Activated CD4-positive, alpha-beta memory T cell treated with anti-CD3 and anti-CD28 coated beads for 36 hours (primary cell): ENCODE measurements at regions of chr1 and their contacts with region 1.

Region 1: DNA sequence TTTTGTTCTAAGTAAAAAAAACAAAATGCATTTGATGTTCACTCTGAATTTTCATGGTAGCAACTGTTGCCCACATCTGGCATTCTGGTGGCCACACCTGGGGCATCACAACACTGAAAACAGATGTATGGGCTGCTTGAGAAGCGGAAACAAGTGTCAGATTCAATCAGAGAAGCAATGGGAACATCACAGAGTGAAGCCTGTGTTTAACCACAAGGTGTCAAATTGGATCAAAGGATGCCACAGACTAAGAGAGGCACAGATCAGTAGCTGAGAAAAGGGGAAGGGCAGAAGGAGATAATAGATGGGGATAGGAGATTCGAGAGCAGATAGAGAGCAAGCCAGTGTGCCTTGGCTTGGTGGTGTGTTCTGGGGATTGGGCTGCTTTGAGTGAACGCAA is 49.8 kb upstream of the MTF2 start:
- DNase-seq: peak; percentile 29
- H3K4me3 Mint-ChIP-seq: no peak overlapping the region
- H3K27ac Mint-ChIP-seq: no peak overlapping the region
- H3K4me1 Mint-ChIP-seq: peaks cover 22% of the 10 kb centered on the region
- H3K27me3 Mint-ChIP-seq: peaks cover 3% of the 10 kb centered on the region

Region 2: GRCh38 chr1:93042187-93043056 is 13.1 kb after region 1 on chr1:
- CTCF ChIA-PET with region 1: no interaction called
- POLR2A ChIA-PET with region 1: no interaction called
- intact Hi-C with region 1: loop called (anchors 2 kb)
- DNase-seq: peak; percentile 21
- H3K4me3 Mint-ChIP-seq: peak overlapping the region; percentile 71
- H3K27ac Mint-ChIP-seq: peak overlapping the region; percentile 88
- H3K4me1 Mint-ChIP-seq: peaks cover 28% of the 10 kb centered on the region
- H3K27me3 Mint-ChIP-seq: no peaks in the 10 kb centered on the region

Region 3: GRCh38 chr1:93061895-93062792 is 32.8 kb after region 1 on chr1:
- CTCF ChIA-PET with region 1: interaction called, 141 read pairs
- POLR2A ChIA-PET with region 1: interaction called, 3 read pairs
- intact Hi-C with region 1: no loop called
- DNase-seq: peak; percentile 61
- H3K4me3 Mint-ChIP-seq: no peak overlapping the region
- H3K27ac Mint-ChIP-seq: no peak overlapping the region
- H3K4me1 Mint-ChIP-seq: peaks cover 4% of the 10 kb centered on the region
- H3K27me3 Mint-ChIP-seq: peaks cover 9% of the 10 kb centered on the region